ENCODE measurements at regions of chr4 and their contacts with region 1.

Region 1: DNA sequence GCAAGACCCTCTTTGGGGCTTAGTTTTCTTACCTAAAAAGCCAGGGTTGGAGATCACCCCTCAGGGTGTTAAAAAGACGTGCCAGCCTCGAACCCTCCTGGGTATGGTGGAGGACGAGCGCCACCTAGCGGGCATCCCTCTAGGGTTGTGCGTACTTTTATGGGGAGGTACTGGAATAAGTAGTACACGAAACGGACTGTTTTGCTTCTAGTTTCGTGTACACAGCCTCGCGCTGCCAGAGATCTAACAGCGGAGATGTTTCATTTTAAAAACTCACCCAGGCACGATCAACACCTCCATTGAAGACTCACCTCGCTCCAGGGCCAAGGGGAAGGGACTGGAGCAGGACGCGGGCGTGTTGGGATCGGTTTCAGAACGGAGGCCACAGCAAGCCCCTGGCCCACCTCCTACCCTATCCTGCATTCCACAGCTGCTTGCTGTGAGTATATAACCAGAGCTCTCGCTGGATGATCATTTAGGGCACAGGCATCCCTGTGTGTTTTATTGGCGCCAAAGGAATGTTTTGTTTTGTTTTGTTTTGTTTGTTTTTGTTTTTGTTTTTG is 4.8 kb upstream of the NKX3-2 start:
- DNase-seq: peak; percentile 75
- H3K4me3 Mint-ChIP-seq: peak overlapping the region; percentile 70
- H3K27ac Mint-ChIP-seq: no peak overlapping the region
- H3K4me1 Mint-ChIP-seq: peaks cover 28% of the 10 kb centered on the region
- H3K27me3 Mint-ChIP-seq: peaks cover 56% of the 10 kb centered on the region

Region 2: DNA sequence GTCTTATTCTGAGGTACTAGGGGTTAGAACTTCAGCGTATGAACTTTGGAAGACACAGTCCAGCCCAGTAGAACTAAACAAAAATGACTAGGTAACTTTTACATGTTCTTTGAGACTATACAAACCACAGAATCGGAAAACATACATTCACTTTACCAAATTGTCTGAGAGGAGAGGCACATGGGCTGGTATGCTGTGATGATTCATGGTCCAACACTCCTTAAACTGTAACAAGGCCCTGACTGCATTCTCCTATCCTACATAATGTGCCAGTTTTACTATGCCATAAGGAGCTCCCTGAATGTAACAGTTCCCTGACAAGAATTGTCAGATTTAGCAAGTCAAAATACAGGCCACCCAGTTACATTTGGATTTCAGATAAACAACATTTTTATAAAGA is 704.9 kb before region 1 on chr4:
- intact Hi-C with region 1: loop called (anchors 2 kb)
- DNase-seq: no peak
- H3K4me3 Mint-ChIP-seq: no peak overlapping the region
- H3K27ac Mint-ChIP-seq: no peak overlapping the region
- H3K4me1 Mint-ChIP-seq: no peaks in the 10 kb centered on the region
- H3K27me3 Mint-ChIP-seq: peaks cover 3% of the 10 kb centered on the region

Region 3: DNA sequence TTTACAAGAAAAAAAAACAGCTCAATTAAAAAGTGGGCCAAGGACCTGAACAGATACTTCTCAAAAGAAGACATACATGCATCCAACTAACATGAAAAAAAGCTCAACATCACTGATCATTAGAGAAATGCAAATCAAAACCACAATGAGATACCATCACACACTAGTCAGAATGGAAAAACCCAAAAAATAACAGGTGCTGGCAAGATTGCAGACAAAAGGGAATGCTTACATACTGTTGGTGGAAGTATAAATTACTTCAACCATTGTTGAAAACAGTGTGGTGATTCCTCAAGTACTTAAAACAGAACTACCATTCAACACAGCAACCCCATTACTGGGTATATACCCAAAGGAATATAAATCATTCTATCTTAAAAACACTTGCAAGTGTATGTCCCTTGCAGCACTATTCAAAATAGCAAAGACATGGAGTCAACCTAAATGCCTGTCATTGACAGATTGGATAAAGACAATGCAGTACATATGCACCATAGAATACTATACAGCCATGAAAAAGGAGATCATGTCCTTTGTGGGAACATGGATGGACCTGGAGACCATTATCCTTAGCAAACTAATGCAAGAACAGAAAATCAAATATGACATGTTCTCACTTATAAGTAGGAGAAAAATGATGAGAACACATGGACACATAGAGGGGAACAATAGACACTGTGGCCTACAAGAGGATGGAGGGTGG is 162.5 kb before region 1 on chr4:
- intact Hi-C with region 1: loop called (anchors 10 kb)
- DNase-seq: no peak
- H3K4me3 Mint-ChIP-seq: no peak overlapping the region
- H3K27ac Mint-ChIP-seq: no peak overlapping the region
- H3K4me1 Mint-ChIP-seq: peaks cover 19% of the 10 kb centered on the region
- H3K27me3 Mint-ChIP-seq: no peaks in the 10 kb centered on the region

Region 4: DNA sequence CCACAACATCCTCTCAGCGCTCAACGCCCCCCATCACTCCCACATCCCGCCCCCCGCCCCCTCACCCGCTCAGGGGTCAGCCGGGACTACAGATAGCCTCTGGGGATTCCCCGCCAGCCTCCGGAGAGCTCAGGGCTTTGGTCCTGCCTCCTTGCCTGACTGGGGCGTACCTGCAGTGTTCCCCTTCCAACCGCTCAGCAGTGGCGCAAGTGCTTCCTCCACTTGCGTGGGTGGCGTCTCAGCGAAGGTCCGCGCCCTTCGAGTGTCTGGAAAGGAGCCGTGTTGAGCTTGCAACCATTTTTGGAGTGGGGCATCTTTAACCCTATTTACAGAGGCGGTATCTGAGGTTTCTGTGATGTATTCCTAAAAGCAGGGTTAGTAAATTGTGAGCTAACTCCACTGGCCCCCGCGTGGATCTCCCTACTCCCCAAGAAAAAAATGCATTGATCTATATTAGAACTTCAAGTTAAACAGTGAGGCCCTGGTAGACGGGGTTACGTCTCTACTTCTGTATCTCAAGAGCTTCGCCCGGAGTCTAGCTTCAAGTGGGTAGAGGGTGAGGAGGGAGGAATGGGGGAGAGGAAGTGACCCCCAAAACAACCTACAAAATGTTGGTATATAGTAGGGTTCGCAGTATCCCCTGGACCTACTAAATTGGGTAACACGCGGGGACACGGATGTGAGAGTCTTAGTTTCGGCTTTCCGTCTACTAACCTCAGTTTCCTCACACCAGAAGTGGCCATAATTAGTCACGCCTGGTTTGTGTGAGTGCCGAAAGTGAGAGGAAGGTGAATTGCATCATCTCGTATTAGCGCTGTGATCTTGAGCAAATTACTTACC is 20.9 kb before region 1 on chr4:
- intact Hi-C with region 1: loop called (anchors 2 kb)
- DNase-seq: no peak
- H3K4me3 Mint-ChIP-seq: peak overlapping the region; percentile 8
- H3K27ac Mint-ChIP-seq: no peak overlapping the region
- H3K4me1 Mint-ChIP-seq: peaks cover 16% of the 10 kb centered on the region
- H3K27me3 Mint-ChIP-seq: peaks cover 89% of the 10 kb centered on the region

Region 5: DNA sequence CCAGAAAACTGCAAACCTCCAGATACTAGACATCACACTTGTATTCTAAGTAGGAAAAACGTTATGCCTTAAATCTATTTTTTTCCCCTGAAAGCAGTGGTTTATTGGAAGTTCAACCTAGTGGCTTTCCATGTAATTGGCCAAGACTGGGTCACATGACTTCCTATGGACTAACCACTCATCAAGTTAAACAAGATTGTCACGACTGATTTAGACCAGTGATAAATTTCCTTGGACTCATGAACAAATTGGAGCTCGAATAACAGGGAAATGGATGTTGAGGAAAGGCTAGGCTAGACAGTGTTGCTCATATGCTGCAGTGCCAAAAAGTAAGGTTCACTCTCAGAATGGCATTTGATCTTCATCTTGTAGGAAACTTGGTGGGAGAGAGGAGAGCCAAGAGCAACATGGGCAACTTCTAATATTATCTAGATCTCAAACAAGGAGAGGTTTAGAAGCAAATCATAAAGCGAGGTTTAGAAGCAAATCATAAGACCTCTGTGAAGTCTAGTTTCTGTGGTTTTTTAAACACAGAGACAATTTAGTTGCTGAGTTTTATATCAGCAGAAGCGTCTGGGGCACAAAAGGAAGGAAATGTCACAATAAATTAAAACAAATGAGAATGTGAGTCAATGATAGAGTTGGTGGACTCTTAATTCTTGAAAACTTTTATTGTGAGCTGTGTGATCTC is 244.1 kb after region 1 on chr4:
- intact Hi-C with region 1: no loop called
- DNase-seq: no peak
- H3K4me3 Mint-ChIP-seq: no peak overlapping the region
- H3K27ac Mint-ChIP-seq: no peak overlapping the region
- H3K4me1 Mint-ChIP-seq: no peaks in the 10 kb centered on the region
- H3K27me3 Mint-ChIP-seq: no peaks in the 10 kb centered on the region

Region 6: GRCh38 chr4:13860126-13860525 is 311.1 kb after region 1 on chr4:
- intact Hi-C with region 1: no loop called
- DNase-seq: no peak
- H3K4me3 Mint-ChIP-seq: no peak overlapping the region
- H3K27ac Mint-ChIP-seq: no peak overlapping the region
- H3K4me1 Mint-ChIP-seq: no peaks in the 10 kb centered on the region
- H3K27me3 Mint-ChIP-seq: no peaks in the 10 kb centered on the region

Measured in activated T-helper 2 cell treated with anti-CD3 and anti-CD28 coated beads, Interferon-gamma antibody, Interleukin-2, Interleukin-4, amounts not matched to agents 10 μg/mL and 5 μg/mL and 100 μg/mL, durations not matched to agents 14 hours and 24 hours and 36 hours (primary cell).